Colonic mucosa (tissue), 4 donors: ENCODE measurements at regions of chr3 and their contacts with region 1.

Region 1: DNA sequence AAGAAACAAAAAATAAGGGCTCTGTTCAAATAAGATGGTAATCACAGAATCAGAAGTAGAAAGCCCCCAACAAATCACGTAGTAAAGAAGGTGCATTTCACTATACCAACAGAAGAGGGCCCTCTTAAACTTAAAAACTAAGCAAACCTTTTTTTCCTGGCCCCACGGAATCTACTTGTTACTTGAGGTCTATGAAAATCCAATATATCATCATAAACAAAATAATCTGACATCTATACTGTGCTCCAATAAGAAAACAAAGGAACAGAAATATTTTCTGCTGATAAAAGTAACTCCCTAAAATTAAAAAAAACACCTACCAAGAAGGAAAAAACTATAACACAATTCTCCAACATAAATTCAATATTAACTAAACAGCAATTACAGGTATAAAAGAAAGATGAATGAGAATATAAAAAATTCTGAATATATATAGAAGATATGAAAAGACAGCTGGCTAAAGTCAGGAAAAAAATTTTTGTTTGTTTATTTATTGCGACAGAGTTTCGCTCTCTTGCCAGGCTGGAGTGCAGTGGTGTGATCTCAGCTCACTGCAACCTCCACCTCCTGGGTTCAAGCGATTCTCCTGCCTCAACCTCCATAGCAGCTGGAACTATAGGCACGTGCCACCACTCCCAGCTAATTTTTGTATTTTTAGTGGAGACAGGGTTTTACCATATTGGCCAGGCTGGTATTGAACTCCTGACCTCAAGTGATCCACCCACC is 81.8 kb downstream of the CLASP2 start:
- DNase-seq: no peak
- H3K4me3 ChIP-seq: no peak overlapping the region
- H3K27ac ChIP-seq: no peak overlapping the region
- H3K4me1 ChIP-seq: no peaks in the 10 kb centered on the region
- H3K27me3 ChIP-seq: no peaks in the 10 kb centered on the region
- CTCF ChIP-seq: peak; percentile 56

Region 2: GRCh38 chr3:33717866-33718594 is 81.7 kb after region 1 on chr3 and contains the start of gene CLASP2:
- intact Hi-C with region 1: loop called (anchors 2 kb)
- DNase-seq: peak; percentile 87
- H3K4me3 ChIP-seq: peak within 1 kb of the TSS; percentile 82
- H3K27ac ChIP-seq: peak within 1 kb of the TSS; percentile 97
- H3K4me1 ChIP-seq: no peaks in the 10 kb centered on the region
- H3K27me3 ChIP-seq: no peaks in the 10 kb centered on the region
- CTCF ChIP-seq: no peak
- total RNA-seq, gene CLASP2: 37.4 to 40.9 TPM

Region 3: GRCh38 chr3:33787328-33788009 is 151.2 kb after region 1 on chr3:
- intact Hi-C with region 1: loop called (anchors 5 kb)
- DNase-seq: peak; percentile 65
- H3K4me3 ChIP-seq: no peak overlapping the region
- H3K27ac ChIP-seq: no peak overlapping the region
- H3K4me1 ChIP-seq: no peaks in the 10 kb centered on the region
- H3K27me3 ChIP-seq: no peaks in the 10 kb centered on the region
- CTCF ChIP-seq: peak; percentile 75